Activated B cell treated with CpG ODN at 0.5 μM for 24 hours (primary cell): ENCODE measurements at regions of chr21 and their contacts with region 1.

Region 1: DNA sequence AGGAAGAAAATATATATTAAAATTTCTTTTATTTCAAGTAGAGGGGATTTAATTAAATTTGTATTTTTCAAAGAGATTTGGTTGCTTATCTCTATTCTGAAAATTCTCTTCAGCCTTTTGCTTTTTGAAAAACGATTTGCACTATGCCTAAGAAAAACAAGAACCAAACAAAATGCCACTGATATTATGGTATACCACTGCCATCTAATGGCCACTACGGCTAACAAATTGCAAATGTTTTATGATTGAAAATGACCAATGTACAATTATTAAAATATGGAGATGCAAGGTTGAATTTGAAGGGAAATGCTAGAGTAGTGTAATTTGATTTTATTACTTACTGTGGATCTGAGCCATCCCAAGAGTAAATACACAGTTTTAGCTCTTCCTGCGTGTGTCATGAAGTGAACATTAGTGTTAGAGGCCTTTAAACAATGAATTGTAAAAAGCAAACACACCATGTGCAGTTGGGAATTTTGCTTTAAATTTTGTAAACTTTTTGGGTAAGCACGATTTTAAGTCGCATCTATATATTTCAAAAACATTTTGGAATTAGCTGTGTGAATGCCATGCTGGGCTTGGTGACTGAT is 137.4 kb upstream of the USP25 start:
- DNase-seq: no peak
- ATAC-seq: no peak
- H3K4me3 Mint-ChIP-seq: no peak overlapping the region
- H3K27ac Mint-ChIP-seq: no peak overlapping the region
- H3K4me1 Mint-ChIP-seq: no peaks in the 10 kb centered on the region
- H3K27me3 Mint-ChIP-seq: no peaks in the 10 kb centered on the region
- CTCF ChIP-seq: no peak

Region 2: DNA sequence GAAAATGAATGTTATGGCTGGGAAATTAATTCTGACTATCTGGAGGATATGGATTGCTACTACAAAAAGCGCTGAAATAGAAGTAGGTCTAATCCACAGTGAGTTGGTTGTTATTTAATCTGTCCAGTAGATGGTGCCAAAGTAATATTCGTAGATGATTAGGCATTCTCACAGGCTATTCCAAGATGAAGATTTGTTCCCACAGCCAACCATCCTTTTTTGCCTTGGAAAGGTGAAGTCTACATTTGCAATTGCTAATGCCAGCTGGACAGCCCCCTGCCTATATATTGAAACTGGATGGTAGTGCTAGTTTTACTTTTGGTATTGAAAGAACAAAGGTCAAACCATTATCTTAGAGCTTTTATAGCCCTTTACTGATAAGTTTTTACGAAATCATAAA is 1332.6 kb before region 1 on chr21:
- CTCF ChIA-PET with region 1: interaction called, 4 read pairs
- POLR2A ChIA-PET with region 1: no interaction called
- intact Hi-C with region 1: loop called (anchors 1 kb)
- DNase-seq: no peak
- ATAC-seq: no peak
- H3K4me3 Mint-ChIP-seq: no peak overlapping the region
- H3K27ac Mint-ChIP-seq: no peak overlapping the region
- H3K4me1 Mint-ChIP-seq: no peaks in the 10 kb centered on the region
- H3K27me3 Mint-ChIP-seq: peaks cover 2% of the 10 kb centered on the region
- CTCF ChIP-seq: no peak

Region 3: DNA sequence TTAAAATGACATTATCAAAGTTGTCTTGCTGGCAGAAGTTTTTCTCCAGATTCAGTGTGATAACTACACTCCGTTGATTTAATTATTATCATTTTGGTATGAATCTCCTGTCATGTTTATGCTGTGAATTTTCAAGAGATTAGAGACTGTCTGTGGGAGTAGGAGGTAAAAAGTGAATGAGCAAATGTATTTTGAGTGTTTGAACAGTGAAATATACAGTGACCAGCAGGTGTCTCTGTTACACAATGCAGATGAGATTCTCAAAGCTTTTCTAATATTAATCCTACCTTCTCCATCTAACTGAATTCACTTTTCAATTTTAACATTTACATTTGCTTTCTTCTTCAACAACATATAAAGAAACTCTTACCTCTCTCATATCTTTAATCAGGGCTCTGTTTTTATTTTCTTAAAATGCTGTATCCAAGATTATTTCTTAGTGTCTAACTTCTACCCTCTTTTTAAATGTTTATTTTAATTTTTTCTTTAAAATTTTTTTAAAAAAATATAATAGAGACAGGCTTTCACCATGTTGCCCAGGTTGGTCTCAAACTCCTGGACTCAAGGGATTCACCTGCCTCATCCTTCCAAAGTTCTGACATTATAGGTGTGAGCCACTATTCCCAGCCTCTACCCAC is 1188.6 kb before region 1 on chr21:
- CTCF ChIA-PET with region 1: no interaction called
- POLR2A ChIA-PET with region 1: no interaction called
- intact Hi-C with region 1: loop called (anchors 1 kb)
- DNase-seq: no peak
- ATAC-seq: peak; percentile 57
- H3K4me3 Mint-ChIP-seq: no peak overlapping the region
- H3K27ac Mint-ChIP-seq: no peak overlapping the region
- H3K4me1 Mint-ChIP-seq: no peaks in the 10 kb centered on the region
- H3K27me3 Mint-ChIP-seq: no peaks in the 10 kb centered on the region
- CTCF ChIP-seq: peak; percentile 77

Region 4: GRCh38 chr21:14773777-14774345 is 818.5 kb before region 1 on chr21:
- CTCF ChIA-PET with region 1: no interaction called
- POLR2A ChIA-PET with region 1: no interaction called
- intact Hi-C with region 1: loop called (anchors 5 kb)
- DNase-seq: peak; percentile 28
- ATAC-seq: peak; percentile 49
- H3K4me3 Mint-ChIP-seq: no peak overlapping the region
- H3K27ac Mint-ChIP-seq: no peak overlapping the region
- H3K4me1 Mint-ChIP-seq: peaks cover 9% of the 10 kb centered on the region
- H3K27me3 Mint-ChIP-seq: no peaks in the 10 kb centered on the region
- CTCF ChIP-seq: peak; percentile 26

Region 5: GRCh38 chr21:15054606-15055239 is 537.6 kb before region 1 on chr21:
- CTCF ChIA-PET with region 1: no interaction called
- POLR2A ChIA-PET with region 1: no interaction called
- intact Hi-C with region 1: no loop called
- DNase-seq: no peak
- ATAC-seq: no peak
- H3K4me3 Mint-ChIP-seq: no peak overlapping the region
- H3K27ac Mint-ChIP-seq: no peak overlapping the region
- H3K4me1 Mint-ChIP-seq: peaks cover 92% of the 10 kb centered on the region
- H3K27me3 Mint-ChIP-seq: no peaks in the 10 kb centered on the region
- CTCF ChIP-seq: no peak

Region 6: GRCh38 chr21:15462092-15462491 is 130.3 kb before region 1 on chr21:
- CTCF ChIA-PET with region 1: no interaction called
- POLR2A ChIA-PET with region 1: no interaction called
- intact Hi-C with region 1: no loop called
- DNase-seq: no peak
- ATAC-seq: no peak
- H3K4me3 Mint-ChIP-seq: no peak overlapping the region
- H3K27ac Mint-ChIP-seq: no peak overlapping the region
- H3K4me1 Mint-ChIP-seq: no peaks in the 10 kb centered on the region
- H3K27me3 Mint-ChIP-seq: peaks cover 3% of the 10 kb centered on the region
- CTCF ChIP-seq: no peak

Region 7: DNA sequence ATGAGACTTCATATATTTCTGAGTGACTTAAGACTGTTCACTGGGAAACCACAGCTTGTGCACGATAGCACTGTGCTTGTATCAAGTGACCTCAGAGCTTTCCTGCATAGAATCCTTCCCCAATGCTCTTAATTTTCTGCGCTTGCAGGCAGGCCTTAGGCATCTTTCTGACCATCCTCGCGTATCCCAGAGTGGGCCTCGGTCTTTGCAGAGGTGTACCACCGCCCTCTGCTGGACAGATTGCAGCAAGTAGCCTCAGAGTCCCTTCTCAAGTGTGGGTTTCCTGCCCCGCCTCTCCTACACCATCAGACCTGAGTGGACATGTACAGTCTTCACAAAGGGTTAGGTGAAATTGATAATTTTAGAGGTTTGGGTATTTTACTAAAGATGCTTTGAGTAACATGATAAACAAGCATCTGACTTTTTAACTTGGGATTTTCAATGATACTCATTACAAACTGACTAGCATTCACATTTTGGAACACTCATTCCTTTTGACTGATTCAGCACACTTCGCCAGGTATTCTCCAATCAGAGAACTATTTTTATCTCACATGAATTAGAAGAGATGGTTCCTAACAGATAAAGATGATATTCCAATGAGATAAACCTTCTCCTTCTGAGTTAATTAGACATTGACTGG is 109.1 kb before region 1 on chr21:
- CTCF ChIA-PET with region 1: interaction called, 4 read pairs
- POLR2A ChIA-PET with region 1: no interaction called
- intact Hi-C with region 1: loop called (anchors 1 kb)
- DNase-seq: peak; percentile 54
- ATAC-seq: peak; percentile 99
- H3K4me3 Mint-ChIP-seq: no peak overlapping the region
- H3K27ac Mint-ChIP-seq: no peak overlapping the region
- H3K4me1 Mint-ChIP-seq: peaks cover 7% of the 10 kb centered on the region
- H3K27me3 Mint-ChIP-seq: no peaks in the 10 kb centered on the region
- CTCF ChIP-seq: no peak